Dorsolateral prefrontal cortex (tissue), 120 donors: ENCODE measurements at regions of chr12 and their contacts with region 1.

Region 1: GRCh38 chr12:15590180-15590826 is 198.9 kb downstream of the EPS8 start:
- DNase-seq: peak in 9 of 10 donors; percentile 46 to 73 (median 56)
- H3K4me3 ChIP-seq: peak overlapping the region in 58 of 59 donors; percentile 12 to 69 (median 44)
- H3K27ac ChIP-seq: peak overlapping the region in 35 of 59 donors; percentile 3 to 71 (median 34)
- H3K27me3 ChIP-seq: no peaks in the 10 kb centered on the region
- CTCF ChIP-seq: peak; percentile 70 to 99 (median 94)

Region 2: DNA sequence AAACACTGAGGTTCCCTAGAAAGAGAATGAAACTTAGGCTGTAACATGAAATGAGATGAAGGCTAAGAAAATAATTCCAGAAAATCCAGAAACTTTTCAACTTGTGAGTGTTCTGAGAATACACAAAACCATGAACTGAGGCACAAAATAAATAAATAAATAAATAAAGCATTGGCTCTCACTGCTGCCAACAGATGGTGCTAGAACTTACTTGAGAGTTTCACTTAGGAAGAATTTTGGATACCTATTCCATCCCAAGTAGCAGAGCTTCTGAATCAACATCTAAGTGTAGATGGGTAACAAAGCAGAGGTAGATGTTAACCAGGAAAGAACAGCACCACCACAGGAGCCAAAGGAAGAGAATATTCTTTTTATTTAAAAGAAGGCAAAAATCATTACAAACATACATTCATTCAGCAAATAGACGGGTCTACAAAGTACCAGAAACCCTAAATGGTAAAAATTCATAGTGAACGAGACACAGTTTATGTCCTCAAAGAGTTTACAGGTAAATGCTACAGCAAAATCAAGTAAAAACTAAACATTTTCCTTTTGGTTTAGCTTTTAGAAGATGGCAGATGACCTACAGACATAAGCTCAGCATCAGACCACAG is 182.2 kb after region 1 on chr12:
- intact Hi-C with region 1: loop called in 1 of 2 experiments (anchors 10 kb)
- DNase-seq: no peak
- H3K4me3 ChIP-seq: no peak overlapping the region
- H3K27ac ChIP-seq: peak overlapping the region in 7 of 59 donors; percentile 7 to 62 (median 44)
- H3K27me3 ChIP-seq: no peaks in the 10 kb centered on the region
- CTCF ChIP-seq: peak in 50 of 56 donors; percentile 11 to 64 (median 44)

Region 3: GRCh38 chr12:15789220-15790171 is 199.2 kb after region 1 on chr12 and contains the start of gene EPS8:
- intact Hi-C with region 1: loop called in 1 of 2 experiments (anchors 5 kb)
- DNase-seq: peak; percentile 83 to 94 (median 88)
- H3K4me3 ChIP-seq: peak within 1 kb of the TSS; percentile 64 to 95 (median 84)
- H3K27ac ChIP-seq: peak within 1 kb of the TSS; percentile 73 to 97 (median 90)
- H3K27me3 ChIP-seq: no peaks in the 10 kb centered on the region
- CTCF ChIP-seq: peak in 36 of 56 donors; percentile 5 to 58 (median 28)
- total RNA-seq, gene EPS8: 15.8 to 61.8 (median 29.0) TPM